ENCODE measurements at regions of chr9 and their contacts with region 1.

Region 1: GRCh38 chr9:130701056-130702022 is 7.8 kb downstream of the EXOSC2 start:
- DNase-seq: peak; percentile 58 to 81 (median 75)
- H3K4me3 ChIP-seq: no peak overlapping the region
- H3K27ac ChIP-seq: no peak overlapping the region
- H3K4me1 ChIP-seq: no peaks in the 10 kb centered on the region
- H3K27me3 ChIP-seq: no peaks in the 10 kb centered on the region
- CTCF ChIP-seq: peak; percentile 69 to 77 (median 72)
- EP300 ChIP-seq: no peak
- POLR2A ChIP-seq: no peak

Region 2: DNA sequence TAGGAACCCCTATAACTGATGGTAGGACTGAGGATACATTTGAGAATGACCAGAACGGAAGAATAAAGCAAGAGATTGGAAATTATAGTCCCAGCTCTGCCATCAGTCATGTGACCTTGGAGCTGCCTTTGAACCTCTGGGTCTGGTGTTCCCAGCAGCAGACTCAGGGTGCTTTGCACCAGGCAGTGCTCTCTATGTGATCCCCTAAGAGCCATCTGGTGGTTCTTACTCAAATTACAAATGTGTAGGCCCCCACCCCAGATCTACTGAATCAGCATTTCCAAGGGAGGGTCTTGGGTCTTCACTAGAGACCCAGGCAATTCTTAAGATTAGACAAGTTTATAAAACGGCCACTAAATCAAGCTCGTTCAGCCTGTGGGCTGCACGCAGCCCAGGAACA is 77.2 kb before region 1 on chr9:
- intact Hi-C with region 1: no loop called
- DNase-seq: no peak
- H3K4me3 ChIP-seq: no peak overlapping the region
- H3K27ac ChIP-seq: no peak overlapping the region
- H3K4me1 ChIP-seq: no peaks in the 10 kb centered on the region
- H3K27me3 ChIP-seq: no peaks in the 10 kb centered on the region
- CTCF ChIP-seq: no peak
- EP300 ChIP-seq: no peak
- POLR2A ChIP-seq: no peak

Region 3: GRCh38 chr9:131046581-131047202 is 345.4 kb after region 1 on chr9:
- intact Hi-C with region 1: loop called in 2 of 4 experiments (anchors 5 to 10 kb)
- DNase-seq: peak; percentile 38 to 79 (median 50)
- H3K4me3 ChIP-seq: no peak overlapping the region
- H3K27ac ChIP-seq: no peak overlapping the region
- H3K4me1 ChIP-seq: no peaks in the 10 kb centered on the region
- H3K27me3 ChIP-seq: no peaks in the 10 kb centered on the region
- CTCF ChIP-seq: peak; percentile 54 to 72 (median 65)
- EP300 ChIP-seq: no peak
- POLR2A ChIP-seq: no peak

Measured in ovary (tissue), 10 donors.